AG04449 (cell line): ENCODE measurements at regions of chr15 and their contacts with region 1.

Region 1: DNA sequence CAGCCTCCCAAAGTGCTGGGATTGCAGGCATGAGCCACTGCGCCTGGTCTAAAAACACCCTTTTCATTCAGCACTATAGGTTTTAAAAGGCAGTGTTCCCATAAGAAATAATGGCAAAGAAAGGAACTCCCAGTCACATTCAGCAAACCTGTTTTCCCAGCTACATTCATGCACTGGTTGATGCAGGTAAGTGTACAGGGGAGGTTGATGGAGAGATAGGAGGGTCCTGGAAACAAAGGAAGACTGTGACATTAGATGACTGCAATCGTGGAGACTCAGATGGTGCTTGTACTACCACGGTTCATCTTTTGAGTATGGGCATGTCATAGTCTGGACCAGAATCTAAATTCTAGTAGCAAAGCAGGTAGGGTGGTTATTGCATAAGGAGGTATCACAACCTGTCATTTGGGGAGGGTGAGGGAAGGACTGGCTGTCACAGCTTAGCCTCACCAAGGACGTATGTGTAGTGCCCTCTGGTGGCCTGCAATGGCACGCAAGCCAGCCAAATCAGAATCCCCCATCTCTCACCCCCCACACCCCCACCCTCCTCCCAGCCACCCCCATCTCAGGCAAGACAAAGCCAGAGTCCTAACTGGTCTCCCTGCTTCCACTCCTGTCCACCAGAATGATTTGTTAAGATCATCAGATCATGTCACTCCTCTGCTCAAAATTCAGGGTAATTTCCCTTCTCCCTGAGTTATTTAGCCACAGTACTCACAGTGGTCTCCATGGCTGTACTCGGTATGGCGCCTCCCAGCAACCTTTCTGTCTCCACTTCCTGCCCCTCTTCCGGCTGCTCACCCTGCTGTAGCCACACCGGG is 28.8 kb upstream of the UBL7 start:
- DNase-seq: no peak
- H3K4me3 ChIP-seq: no peak overlapping the region
- CTCF ChIP-seq: peak; percentile 82

Region 2: GRCh38 chr15:74470631-74471395 is 18.9 kb before region 1 on chr15:
- CTCF ChIA-PET with region 1: interaction called, 11 read pairs
- POLR2A ChIA-PET with region 1: no interaction called
- DNase-seq: no peak
- H3K4me3 ChIP-seq: no peak overlapping the region
- CTCF ChIP-seq: no peak